Heart left ventricle (tissue), 16 donors: ENCODE measurements at regions of chr1 and their contacts with region 1.

Region 1: DNA sequence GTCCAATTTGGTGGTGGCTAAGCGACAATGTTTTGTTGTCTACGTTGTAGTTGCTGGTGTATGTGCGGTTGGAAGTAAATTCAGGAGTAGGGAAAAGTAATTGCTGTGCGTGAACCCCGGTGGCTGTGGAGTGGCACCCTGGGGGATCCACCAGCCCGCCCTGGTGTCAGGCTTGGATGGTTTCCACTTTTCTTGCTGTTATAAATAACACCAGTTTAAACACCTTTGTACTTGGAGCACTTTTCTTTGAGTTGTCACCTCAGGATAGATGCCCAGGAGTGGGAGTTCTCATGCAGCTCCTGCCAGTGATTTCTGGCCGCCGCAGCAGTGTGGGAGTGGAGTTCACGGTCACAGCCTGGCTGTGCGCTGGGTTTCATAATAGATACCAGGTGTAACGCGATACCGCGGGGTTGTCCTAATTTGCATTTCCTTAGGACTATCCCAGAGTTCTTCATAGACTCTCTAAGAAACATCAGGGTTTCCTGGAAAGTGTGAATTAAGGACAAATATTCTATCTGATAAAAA is 12.8 kb upstream of the TMEM200B start:
- DNase-seq: peak in 1 of 5 donors; percentile 39
- ATAC-seq: peak in 2 of 4 donors; percentile 15 to 18
- H3K4me3 ChIP-seq: no peak overlapping the region
- H3K27ac ChIP-seq: no peak overlapping the region
- H3K4me1 ChIP-seq: peaks cover 0 to 17% (median 4%) of the 10 kb centered on the region in 12 donors
- H3K27me3 ChIP-seq: peaks cover 0 to 11% (median 0%) of the 10 kb centered on the region in 9 donors
- CTCF ChIP-seq: no peak
- POLR2A ChIP-seq: no peak

Region 2: DNA sequence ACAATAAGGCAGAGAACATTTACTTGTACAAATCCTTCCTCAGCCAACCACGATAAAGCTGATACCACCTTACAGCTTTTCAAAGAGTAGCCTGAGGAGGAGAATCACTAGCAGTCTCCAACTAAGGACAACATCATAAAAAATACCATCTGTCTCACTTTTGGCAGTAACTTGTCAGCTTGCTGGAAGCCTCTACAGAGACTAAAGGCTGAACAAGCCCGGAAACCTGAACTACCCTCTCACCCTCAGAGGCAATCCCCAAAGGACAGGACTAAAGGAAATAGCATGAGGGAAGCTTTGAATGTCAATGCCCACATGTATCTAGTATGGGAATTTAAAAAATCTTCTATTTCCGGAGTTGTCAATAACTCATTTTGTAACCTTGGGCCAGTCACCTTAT is 34.6 kb after region 1 on chr1:
- intact Hi-C with region 1: loop called in 2 of 10 experiments (anchors 2 to 5 kb)
- DNase-seq: no peak
- ATAC-seq: peak in 2 of 4 donors; percentile 22
- H3K4me3 ChIP-seq: no peak overlapping the region
- H3K27ac ChIP-seq: peak overlapping the region in 1 of 12 donors; percentile 13
- H3K4me1 ChIP-seq: peaks cover 2 to 62% (median 43%) of the 10 kb centered on the region in 12 donors
- H3K27me3 ChIP-seq: no peaks in the 10 kb centered on the region
- CTCF ChIP-seq: no peak
- POLR2A ChIP-seq: no peak

Region 3: GRCh38 chr1:29176591-29176990 is 40.1 kb after region 1 on chr1:
- intact Hi-C with region 1: loop called in 2 of 10 experiments (anchors 2 to 5 kb)
- DNase-seq: no peak
- ATAC-seq: no peak
- H3K4me3 ChIP-seq: no peak overlapping the region
- H3K27ac ChIP-seq: peak overlapping the region in 5 of 12 donors; percentile 20 to 64 (median 27)
- H3K4me1 ChIP-seq: peaks cover 11 to 68% (median 58%) of the 10 kb centered on the region in 12 donors
- H3K27me3 ChIP-seq: no peaks in the 10 kb centered on the region
- CTCF ChIP-seq: no peak
- POLR2A ChIP-seq: no peak